CD14-positive monocyte (primary cell): ENCODE measurements at regions of chr22 and their contacts with region 1.

Region 1: DNA sequence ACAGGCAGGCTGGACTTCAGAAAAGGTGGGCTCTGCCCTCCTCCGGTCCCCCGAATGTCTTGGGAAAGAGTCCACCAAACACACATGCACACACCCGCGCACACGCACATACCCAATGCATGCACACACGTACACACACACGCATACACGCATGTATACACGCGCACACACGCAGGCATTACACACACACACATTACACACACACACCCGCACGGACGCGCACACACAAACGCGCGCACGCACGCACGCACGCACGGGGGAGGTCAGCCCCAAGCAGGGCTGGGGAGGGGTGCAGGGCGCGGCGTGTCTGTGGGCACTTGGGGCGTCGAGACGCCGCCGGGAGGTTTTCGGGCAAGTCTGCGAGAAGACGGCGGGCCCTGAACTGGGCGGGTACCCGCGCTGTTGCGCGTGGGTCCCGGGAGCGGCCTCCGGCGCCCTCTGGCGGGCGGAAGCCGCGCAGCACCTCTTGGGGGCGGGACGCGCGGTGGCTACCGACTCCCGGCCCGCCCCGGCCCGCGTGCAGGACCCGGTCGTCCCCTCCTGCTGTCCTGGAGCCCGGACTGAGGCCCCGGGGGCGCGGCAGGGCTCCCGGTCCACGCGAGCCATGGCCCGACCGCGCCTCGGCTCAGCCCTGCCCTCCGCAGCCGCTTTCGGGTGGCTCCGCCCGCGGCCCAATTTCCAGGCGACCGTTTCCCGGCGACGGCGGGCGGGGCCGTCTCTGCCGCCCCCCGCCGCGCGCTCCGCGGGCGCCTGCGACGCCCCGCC is 3.6 kb downstream of the SEPTIN5 start:
- DNase-seq: peak; percentile 63 to 67 (median 67)
- H3K4me3 ChIP-seq: peak overlapping the region in 2 of 3 experiments; percentile 26 to 63
- H3K4me3 Mint-ChIP-seq: peak overlapping the region; percentile 61 to 84
- H3K27ac ChIP-seq: no peak overlapping the region
- H3K27ac Mint-ChIP-seq: no peak overlapping the region
- H3K4me1 ChIP-seq: peaks cover 18 to 36% of the 10 kb centered on the region in 2 donors
- H3K4me1 Mint-ChIP-seq: peaks cover 13% of the 10 kb centered on the region
- H3K27me3 ChIP-seq: peaks cover 5 to 81% of the 10 kb centered on the region in 2 donors
- H3K27me3 Mint-ChIP-seq: peaks cover 56 to 90% (median 59%) of the 10 kb centered on the region in 3 donors
- CTCF ChIP-seq: peak; percentile 96

Region 2: DNA sequence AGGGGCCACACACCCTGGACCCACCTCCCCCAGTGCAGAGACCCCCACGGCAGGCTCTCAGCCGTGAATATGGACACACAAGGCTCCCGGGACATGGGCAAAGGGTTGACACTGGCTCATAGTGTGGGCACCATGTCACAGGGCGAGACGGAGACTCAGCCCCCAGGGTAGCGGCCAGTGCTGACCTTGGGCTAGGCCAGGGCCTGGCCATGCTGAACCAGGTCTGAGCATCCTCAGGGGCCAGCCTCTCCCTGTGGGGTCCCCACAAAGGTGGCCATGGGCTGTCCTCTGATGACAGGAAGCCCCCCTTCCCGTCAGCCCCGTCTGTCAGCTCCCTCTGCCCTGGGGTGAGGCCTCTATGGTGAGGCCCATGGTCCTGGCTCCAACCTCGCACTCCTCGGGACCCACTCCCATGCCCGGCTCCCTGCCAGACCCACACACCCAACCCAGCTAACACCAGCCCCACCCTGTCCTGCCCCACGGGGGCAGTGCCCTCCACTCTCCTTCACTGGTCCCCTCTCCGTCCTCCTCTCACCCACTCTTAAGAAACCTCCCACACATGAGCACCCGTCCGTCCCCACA is 762.8 kb before region 1 on chr22:
- intact Hi-C with region 1: loop called in 1 of 2 experiments (anchors 5 kb)
- DNase-seq: no peak
- H3K4me3 ChIP-seq: no peak overlapping the region
- H3K4me3 Mint-ChIP-seq: no peak overlapping the region
- H3K27ac ChIP-seq: no peak overlapping the region
- H3K27ac Mint-ChIP-seq: no peak overlapping the region
- H3K4me1 ChIP-seq: no peaks in the 10 kb centered on the region
- H3K4me1 Mint-ChIP-seq: no peaks in the 10 kb centered on the region
- H3K27me3 ChIP-seq: no peaks in the 10 kb centered on the region
- H3K27me3 Mint-ChIP-seq: peaks cover 4 to 6% (median 5%) of the 10 kb centered on the region in 3 donors
- CTCF ChIP-seq: no peak

Region 3: DNA sequence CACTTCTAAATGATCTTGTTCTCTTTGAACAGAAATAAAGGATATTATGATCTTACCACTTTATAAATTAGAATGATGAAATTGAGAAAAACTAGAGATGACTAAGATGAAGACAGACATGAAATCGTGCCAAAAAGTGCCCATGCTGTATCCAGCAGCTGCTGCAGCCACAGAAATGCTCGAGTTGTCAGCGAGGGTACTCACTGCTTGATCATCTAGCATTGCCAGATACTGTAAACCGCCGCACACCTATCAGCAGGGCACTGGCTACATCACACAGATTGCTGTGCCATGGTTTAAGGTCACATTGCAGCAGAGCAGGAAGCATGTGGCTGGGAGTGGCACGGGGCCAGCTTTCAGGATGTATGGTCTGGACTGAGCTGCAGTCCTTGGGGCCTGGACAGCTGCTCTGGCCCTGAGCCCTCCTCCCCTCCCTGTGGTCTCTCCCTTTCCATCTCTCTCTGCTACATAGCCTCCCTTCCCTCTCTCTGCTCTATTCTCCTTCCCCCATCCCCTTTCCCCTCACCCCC is 54.5 kb before region 1 on chr22:
- intact Hi-C with region 1: no loop called
- DNase-seq: peak in 1 of 3 donors; percentile 14
- H3K4me3 ChIP-seq: no peak overlapping the region
- H3K4me3 Mint-ChIP-seq: no peak overlapping the region
- H3K27ac ChIP-seq: no peak overlapping the region
- H3K27ac Mint-ChIP-seq: no peak overlapping the region
- H3K4me1 ChIP-seq: peaks cover 4 to 7% of the 10 kb centered on the region in 2 donors
- H3K4me1 Mint-ChIP-seq: peaks cover 16% of the 10 kb centered on the region
- H3K27me3 ChIP-seq: no peaks in the 10 kb centered on the region
- H3K27me3 Mint-ChIP-seq: peaks cover 0 to 7% (median 3%) of the 10 kb centered on the region in 3 donors
- CTCF ChIP-seq: no peak

Region 4: GRCh38 chr22:19679522-19680101 is 38.3 kb before region 1 on chr22:
- intact Hi-C with region 1: loop called (anchors 2 to 5 kb)
- DNase-seq: peak; percentile 35 to 51 (median 44)
- H3K4me3 ChIP-seq: no peak overlapping the region
- H3K4me3 Mint-ChIP-seq: no peak overlapping the region
- H3K27ac ChIP-seq: no peak overlapping the region
- H3K27ac Mint-ChIP-seq: no peak overlapping the region
- H3K4me1 ChIP-seq: no peaks in the 10 kb centered on the region
- H3K4me1 Mint-ChIP-seq: peaks cover 8% of the 10 kb centered on the region
- H3K27me3 ChIP-seq: no peaks in the 10 kb centered on the region
- H3K27me3 Mint-ChIP-seq: peaks cover 12 to 16% (median 14%) of the 10 kb centered on the region in 3 donors
- CTCF ChIP-seq: peak; percentile 99